Activated CD8-positive, alpha-beta T cell treated with anti-CD3 and anti-CD28 coated beads, Interleukin-2, amount 10 ng/mL, durations not matched to agents 7 days and 5 days (primary cell): ENCODE measurements at regions of chr12 and their contacts with region 1.

Region 1: DNA sequence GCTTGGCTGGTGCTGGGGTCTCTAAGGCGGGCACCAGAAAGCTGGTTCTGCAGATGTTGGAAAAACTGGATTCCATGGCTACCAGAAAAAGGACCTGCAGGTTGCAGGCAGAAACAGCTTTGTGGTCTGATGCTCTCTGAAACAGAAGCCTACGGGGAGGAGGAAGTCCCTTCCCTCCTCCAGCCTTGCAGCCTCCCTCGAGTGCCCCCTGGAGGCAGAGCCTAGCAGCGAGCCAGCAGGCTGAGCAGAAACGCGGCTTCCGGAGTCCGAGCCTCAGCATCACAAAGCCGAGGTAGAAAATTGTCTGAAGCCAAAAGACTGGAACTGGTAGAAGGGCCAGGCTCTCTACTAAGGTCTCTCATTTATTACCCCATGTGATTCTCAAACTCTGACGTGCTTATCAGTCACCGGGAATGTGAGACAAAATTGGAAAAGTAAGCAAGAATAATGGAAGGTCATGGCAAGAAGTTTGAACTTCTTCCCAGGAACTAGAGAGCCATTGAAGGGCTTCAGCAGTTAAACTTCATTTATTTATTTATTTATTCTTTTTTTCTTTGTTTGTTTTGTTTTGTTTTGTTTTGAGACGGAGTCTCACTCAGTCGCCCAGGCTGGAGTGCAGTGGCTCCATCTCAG is 82.2 kb upstream of the CPSF6 start:
- DNase-seq: peak; percentile 95
- ATAC-seq: peak; percentile 93
- H3K4me3 Mint-ChIP-seq: peak overlapping the region; percentile 34
- H3K27ac Mint-ChIP-seq: peak overlapping the region; percentile 53
- H3K4me1 Mint-ChIP-seq: peaks cover 48% of the 10 kb centered on the region
- H3K27me3 Mint-ChIP-seq: peaks cover 3% of the 10 kb centered on the region

Region 2: GRCh38 chr12:69130064-69130463 is 27.1 kb before region 1 on chr12:
- CTCF ChIA-PET with region 1: no interaction called
- POLR2A ChIA-PET with region 1: no interaction called
- DNase-seq: no peak
- ATAC-seq: no peak
- H3K4me3 Mint-ChIP-seq: no peak overlapping the region
- H3K27ac Mint-ChIP-seq: no peak overlapping the region
- H3K4me1 Mint-ChIP-seq: no peaks in the 10 kb centered on the region
- H3K27me3 Mint-ChIP-seq: peaks cover 7% of the 10 kb centered on the region

Region 3: GRCh38 chr12:69168828-69169227 is 11.7 kb after region 1 on chr12:
- CTCF ChIA-PET with region 1: interaction called, 14 read pairs
- POLR2A ChIA-PET with region 1: interaction called, 3 read pairs
- DNase-seq: no peak
- ATAC-seq: no peak
- H3K4me3 Mint-ChIP-seq: no peak overlapping the region
- H3K27ac Mint-ChIP-seq: no peak overlapping the region
- H3K4me1 Mint-ChIP-seq: no peaks in the 10 kb centered on the region
- H3K27me3 Mint-ChIP-seq: no peaks in the 10 kb centered on the region

Region 4: DNA sequence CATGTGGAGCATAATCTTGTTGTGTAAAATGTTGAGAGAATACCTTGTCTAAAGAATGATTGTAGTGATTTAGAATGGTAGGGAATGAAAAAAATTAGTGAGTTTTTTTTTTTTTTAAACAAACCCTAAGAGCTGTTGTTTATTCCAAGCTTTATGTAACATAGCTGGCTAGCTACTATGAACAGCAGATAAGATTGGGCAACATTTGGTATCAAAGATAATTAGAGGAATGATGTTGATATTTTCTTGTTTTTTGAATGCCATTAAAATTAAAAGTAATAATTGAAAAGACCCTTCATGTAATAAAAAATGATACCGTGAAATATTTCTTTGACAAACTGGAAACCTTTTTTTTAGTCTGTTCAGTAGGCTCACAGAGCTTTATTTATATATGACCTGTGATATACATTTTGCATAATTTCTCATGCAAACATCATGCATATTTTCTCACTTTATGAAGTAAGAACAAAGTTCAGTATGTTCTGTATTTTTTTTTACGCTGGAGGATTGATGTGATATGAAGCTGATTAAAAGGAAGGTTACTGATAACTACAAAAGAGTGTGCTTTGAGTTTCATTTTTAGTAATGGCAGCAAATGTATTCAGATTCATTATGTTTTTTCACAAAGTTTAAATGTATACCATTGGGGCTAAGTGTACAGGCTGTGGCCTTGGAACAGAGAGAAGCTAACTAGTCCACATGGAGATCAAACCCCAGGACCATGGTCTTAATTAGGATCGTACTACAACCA is 90.3 kb after region 1 on chr12:
- CTCF ChIA-PET with region 1: interaction called, 118 read pairs
- POLR2A ChIA-PET with region 1: interaction called, 3 read pairs
- DNase-seq: no peak
- ATAC-seq: no peak
- H3K4me3 Mint-ChIP-seq: no peak overlapping the region
- H3K27ac Mint-ChIP-seq: no peak overlapping the region
- H3K4me1 Mint-ChIP-seq: peaks cover 58% of the 10 kb centered on the region
- H3K27me3 Mint-ChIP-seq: no peaks in the 10 kb centered on the region

Region 5: DNA sequence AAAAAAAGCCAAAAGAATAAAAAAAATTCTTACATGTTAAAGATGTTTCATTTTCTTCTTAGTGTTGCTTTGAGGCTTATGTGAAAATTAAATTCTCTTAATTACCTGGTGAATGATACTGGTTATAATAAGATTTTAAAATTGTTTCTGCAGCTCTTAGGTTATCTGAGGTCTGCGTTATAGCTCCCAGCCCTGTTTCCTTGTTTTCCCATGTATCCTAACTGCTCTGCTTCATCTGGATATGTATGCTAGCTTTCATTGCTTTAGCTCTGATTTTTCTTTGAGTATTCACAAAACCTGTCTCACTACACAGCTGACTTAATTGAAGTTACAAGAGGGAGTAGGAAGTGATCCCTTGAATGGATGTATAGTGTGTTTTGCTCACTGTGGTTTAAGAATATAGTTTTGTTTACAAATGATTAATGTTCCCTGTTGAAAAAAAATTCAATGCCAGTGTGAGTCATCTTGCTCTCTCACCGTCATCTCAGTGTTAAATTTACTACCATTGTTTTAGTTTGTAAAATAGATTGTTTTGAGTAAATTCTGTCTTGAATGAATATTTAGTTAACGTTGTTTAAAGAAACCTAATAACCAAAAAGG is 109.0 kb after region 1 on chr12:
- CTCF ChIA-PET with region 1: interaction called, 11 read pairs
- POLR2A ChIA-PET with region 1: no interaction called
- DNase-seq: no peak
- ATAC-seq: no peak
- H3K4me3 Mint-ChIP-seq: no peak overlapping the region
- H3K27ac Mint-ChIP-seq: no peak overlapping the region
- H3K4me1 Mint-ChIP-seq: peaks cover 3% of the 10 kb centered on the region
- H3K27me3 Mint-ChIP-seq: no peaks in the 10 kb centered on the region

Region 6: GRCh38 chr12:69330475-69331473 is 173.6 kb after region 1 on chr12:
- CTCF ChIA-PET with region 1: interaction called, 13 read pairs
- POLR2A ChIA-PET with region 1: interaction called, 12 read pairs
- DNase-seq: peak; percentile 73
- ATAC-seq: peak; percentile 85
- H3K4me3 Mint-ChIP-seq: peak overlapping the region; percentile 79
- H3K27ac Mint-ChIP-seq: peak overlapping the region; percentile 92
- H3K4me1 Mint-ChIP-seq: peaks cover 43% of the 10 kb centered on the region
- H3K27me3 Mint-ChIP-seq: no peaks in the 10 kb centered on the region